ENCODE measurements at regions of chr6 and their contacts with region 1.

Region 1: DNA sequence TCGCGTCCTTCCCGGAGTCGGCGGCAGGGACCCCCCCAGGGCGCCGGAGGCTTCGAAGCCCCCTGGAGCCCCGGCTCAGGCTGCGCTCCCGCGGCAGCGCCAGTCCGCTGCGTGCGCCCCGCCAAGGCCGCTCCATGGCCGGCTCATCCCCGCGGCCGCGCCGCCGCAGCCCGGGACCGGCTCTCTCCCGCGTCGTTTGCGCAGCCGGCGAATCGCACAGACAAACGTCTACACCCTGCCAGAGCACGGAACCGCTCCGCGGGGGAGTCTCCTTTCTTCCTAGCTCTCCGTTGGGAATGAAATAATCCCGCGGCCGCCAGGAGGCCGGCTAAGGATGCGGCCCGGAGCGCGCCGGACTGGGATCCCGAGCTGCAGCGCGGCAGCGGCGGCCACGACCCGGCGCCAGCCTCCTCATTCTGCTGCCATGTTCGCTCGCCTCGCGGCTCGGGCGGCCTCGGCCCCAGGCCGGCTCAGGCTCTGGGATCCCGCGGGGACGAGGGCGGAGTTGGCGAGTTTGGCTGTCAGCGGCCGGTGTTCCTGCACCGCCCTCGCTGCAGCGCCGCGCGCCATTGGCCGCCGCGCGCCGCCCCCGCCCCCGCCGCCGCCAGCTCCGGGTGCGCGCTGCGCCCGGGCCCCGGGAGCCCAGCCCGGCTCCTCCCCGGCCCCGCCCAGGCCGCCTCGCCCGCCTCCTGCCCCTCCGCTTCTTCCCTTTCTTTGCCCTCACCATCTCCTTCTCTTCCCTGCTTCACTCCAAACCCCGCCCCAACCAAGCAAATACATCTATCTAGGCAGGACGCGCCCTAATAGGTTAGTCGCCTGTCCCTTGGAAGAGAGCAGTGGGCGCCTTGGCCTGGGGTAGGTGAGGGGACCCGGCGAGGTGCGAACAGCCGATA is at the start of gene GFOD1:
- DNase-seq: peak; percentile 82
- H3K4me3 Mint-ChIP-seq: peak within 1 kb of the TSS; percentile 73
- H3K27ac Mint-ChIP-seq: peak within 1 kb of the TSS; percentile 15
- H3K4me1 Mint-ChIP-seq: peaks cover 29% of the 10 kb centered on the region
- H3K27me3 Mint-ChIP-seq: peaks cover 13% of the 10 kb centered on the region
- total RNA-seq, gene GFOD1: 2.3 to 2.4 TPM

Region 2: GRCh38 chr6:13466304-13467215 is 20.8 kb before region 1 on chr6:
- CTCF ChIA-PET with region 1: interaction called, 3 read pairs
- POLR2A ChIA-PET with region 1: interaction called, 4 read pairs
- intact Hi-C with region 1: loop called (anchors 1 kb)
- DNase-seq: peak; percentile 81
- H3K4me3 Mint-ChIP-seq: peak overlapping the region; percentile 42
- H3K27ac Mint-ChIP-seq: peak overlapping the region; percentile 86
- H3K4me1 Mint-ChIP-seq: peaks cover 34% of the 10 kb centered on the region
- H3K27me3 Mint-ChIP-seq: no peaks in the 10 kb centered on the region

Region 3: GRCh38 chr6:13500264-13500663 is 12.9 kb after region 1 on chr6:
- CTCF ChIA-PET with region 1: no interaction called
- POLR2A ChIA-PET with region 1: no interaction called
- intact Hi-C with region 1: no loop called
- DNase-seq: peak; percentile 35
- H3K4me3 Mint-ChIP-seq: no peak overlapping the region
- H3K27ac Mint-ChIP-seq: no peak overlapping the region
- H3K4me1 Mint-ChIP-seq: peaks cover 5% of the 10 kb centered on the region
- H3K27me3 Mint-ChIP-seq: no peaks in the 10 kb centered on the region

Region 4: GRCh38 chr6:13593720-13594119 is 106.4 kb after region 1 on chr6:
- CTCF ChIA-PET with region 1: no interaction called
- POLR2A ChIA-PET with region 1: no interaction called
- intact Hi-C with region 1: no loop called
- DNase-seq: no peak
- H3K4me3 Mint-ChIP-seq: no peak overlapping the region
- H3K27ac Mint-ChIP-seq: no peak overlapping the region
- H3K4me1 Mint-ChIP-seq: no peaks in the 10 kb centered on the region
- H3K27me3 Mint-ChIP-seq: no peaks in the 10 kb centered on the region